ENCODE measurements at regions of chr19 and their contacts with region 1.

Region 1: DNA sequence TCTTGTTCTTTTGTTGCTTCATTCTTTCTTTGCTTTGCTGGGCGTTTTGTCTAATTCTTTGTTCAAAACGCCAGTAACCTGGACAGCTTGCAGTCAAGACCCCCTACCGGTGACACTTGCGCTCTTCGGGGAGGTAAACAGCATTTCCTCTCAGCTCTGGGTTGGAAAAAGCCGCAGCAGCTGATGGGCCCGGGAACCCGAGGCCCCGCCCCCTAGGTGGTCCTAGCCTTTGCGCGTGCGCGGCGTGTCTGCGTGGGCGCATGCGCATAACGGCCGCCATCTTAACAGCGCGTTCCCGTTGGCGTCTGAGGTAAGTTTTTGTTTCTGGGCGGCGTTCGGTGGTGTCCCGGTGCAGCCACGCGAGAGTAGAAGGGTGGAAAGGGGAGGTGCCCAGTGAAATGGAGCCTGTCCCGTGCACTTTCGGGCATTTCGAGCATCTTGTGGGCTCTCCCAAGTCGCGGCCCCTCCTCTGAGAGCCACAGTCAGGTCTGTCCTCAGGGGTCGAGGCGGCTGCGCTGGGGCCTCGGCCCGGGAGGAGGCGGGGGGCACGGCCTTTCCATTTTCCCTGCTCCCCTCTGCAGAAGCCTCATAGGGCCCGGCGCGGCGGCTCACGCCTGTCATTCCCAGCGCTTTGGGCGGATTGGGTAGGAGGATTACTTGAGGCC is at the start of gene ZNF559:
- DNase-seq: peak; percentile 95
- total RNA-seq, gene ZNF559: 18.2 TPM

Region 2: DNA sequence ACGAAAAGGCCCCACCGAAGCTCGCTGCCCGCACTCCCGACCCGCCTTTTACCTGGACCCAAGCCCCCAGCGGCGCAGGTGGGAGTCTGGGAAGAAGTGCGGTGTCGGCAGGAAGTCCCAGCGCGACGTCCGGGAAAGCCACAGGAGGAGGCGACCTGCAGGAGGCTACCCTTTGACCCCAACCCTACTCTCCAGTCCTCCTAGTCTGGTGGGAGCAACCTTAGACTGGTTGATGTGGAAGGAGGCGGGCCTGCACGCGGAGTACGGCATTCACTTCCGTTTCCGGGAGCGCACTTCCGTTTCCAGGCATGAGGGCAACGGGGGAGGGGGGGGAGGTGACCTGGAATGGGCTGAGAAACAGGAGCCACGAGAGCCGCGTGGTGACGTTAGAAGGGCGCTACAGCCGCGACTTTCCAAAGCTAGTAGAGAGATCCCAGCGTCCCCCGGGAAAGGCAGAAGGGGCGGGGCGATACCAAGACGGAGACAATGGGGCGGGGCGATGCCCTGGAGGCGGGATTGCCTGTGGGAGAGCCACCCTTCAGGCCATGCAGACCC is 82.8 kb after region 1 on chr19:
- intact Hi-C with region 1: loop called (anchors 5 kb)
- DNase-seq: peak; percentile 89

Region 3: DNA sequence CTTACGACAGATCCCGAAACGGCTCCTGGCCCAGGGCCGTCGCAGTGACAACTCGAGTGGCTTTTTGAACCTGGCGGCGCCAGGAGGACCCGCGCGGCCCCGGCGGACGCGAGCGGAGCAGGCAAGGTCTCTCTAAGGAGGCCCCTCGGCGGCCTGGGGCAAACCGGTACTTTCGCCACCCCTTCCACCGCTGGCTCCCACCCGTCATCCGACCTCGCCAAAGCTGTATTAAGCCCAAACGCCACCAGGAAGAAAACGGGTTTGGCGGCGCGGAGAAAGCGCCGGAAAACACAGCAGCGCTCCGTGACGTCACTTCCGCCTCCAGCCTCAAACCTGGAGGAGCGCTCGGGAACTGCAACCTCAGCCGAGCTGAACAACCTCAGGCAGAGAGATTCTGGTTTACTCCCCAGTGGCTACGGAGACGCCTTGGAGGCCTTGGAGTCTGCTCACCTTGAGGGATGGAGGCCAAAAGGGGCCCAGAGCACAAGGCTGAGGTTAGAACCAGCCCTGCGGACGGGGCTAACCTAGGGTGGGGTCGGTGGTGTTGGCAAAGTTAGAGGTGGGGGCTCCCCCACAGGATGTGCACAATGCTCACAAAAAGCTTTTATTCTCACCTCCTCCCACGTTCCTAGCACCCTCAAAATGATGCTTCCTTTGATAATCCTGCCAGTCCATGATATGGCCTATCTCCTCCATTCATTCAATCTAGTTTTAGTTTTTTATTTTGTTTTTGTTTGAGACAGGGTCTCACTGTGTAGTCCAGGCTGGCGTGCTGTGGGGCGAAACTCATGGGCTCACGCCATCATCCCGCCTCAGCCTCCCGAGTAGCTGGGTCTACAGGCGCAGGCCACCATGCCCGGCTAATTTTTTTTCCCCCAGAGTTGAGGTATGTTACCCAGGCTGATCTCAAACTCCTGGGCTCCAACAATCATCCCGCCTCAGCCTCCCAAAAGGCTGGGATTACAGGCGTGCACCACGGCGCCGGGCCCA is 111.5 kb after region 1 on chr19 and contains the start of gene ZNF266:
- intact Hi-C with region 1: loop called (anchors 5 kb)
- DNase-seq: peak; percentile 94
- total RNA-seq, gene ZNF266: 7.3 TPM